GM18951 (cell line): ENCODE measurements at regions of chr6 and their contacts with region 1.

Region 1: DNA sequence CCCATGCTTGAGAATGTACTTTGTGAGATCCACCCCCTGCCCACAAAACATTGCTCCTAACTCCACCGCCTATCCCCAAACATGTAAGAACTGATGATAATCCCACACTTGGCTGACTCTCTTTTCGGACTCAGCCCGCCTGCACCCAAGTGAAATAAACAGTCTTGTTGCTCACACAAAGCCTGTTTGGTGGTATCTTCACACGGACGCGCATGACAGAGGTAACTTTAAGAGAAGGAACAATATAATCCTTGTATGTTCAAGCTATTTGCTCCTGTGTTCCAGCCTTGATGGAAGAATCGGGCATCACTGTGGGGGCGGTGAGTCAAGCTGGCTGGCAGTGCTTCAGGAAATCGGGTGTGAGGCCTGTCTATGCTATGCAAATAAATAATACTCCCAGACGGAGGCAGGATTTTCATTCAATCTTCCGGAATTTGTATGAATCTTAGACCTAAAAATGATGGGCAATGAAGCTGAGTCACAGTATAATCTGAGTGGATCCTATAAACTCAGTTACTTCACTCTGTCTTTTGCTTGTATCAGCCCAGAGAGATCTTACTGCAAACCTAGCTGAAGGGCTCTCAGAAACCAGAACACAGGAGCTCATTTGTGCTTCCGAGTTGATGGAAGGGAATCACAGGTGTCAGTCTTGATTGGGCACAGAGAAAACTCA is 45.2 kb upstream of the NT5E start:
- POLR2A ChIP-seq: no peak

Region 2: DNA sequence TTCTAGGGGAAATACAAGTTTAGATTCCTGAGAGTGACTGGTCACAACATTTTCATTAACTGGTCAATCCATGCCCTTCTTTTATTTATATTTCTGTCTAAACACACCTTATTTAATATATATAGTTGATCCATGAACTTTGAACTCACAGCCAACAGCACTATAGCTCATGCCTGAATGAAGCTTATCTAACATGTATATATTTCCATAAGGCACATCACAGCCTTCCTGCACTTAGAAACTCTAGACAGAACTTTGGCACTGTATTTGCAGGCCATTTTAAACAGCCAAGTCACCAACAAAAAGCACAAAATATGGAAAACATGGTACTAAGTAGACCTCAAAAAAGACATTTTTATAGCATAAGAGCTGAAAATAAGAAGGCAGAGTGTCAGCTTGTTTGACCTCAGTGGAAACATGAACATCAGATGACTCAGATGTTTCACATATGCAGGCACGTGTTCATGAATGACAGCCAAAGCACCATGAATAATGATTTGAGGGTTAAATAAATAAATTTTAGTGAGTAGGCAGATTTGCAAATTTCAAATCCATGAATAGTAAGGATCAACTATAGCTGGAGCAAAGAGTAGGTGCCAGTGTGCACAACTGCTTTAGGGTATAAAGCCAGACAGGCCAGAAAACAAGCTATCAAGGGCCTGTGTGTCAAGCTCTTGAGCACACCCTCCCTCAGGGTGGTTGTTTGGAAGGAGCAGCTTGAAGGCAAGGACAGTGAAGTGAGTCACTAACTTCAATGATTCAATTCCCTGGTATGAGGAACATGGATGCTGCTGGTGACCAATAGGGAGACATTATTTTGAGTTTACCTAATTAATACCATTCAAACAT is 43.6 kb before region 1 on chr6:
- in situ Hi-C with region 1: loop called (anchors 5 kb)
- POLR2A ChIP-seq: no peak